HCT116 (cell line): ENCODE measurements at regions of chr20 and their contacts with region 1.

Region 1: DNA sequence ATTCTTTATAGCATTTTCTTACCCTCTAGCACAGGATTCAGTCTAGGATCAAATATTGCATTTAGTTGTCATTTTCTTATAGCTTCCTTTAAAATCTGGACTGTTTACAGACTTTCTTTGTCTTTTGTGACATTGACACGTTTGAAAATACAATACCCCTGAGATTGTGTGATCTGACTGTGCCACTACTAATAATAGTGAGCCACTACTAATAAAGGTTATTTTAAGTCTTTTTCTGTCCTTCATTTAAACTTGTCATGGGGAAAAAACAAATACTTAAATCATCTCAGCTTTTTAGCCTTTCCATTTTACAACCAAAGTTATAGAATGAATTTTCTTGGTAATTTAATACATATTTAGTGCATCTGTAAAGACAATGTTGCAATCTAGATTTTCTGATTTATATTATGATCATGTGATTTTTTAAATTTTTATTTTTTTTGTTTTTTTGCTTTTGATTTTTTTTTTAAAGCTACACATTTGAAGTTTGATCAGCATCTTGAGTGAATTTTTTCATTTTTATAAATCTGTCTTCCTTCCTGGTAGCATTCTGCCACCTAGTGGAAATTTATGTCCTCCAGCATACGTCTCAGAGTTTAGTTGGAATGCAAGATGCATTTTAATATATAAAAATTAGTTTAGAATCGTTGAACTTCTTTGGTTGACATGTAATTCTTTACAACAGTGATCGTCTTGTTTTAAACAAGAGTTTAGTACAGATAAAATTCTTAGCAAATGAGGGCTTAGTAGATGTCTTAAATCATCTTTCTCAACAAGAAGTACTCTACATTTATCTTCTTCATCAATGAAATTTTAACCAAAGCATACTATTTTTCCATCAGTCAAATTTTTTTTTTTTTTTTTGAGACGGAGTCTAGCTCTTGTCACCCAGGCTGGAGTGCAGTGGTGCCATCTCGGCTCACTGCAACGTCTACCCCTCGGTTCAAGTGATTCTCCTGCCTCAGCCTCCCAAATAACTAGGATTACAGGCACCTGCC is 119.4 kb downstream of the NCOA3 start:
- DNase-seq: peak; percentile 51
- ATAC-seq: no peak
- H3K4me3 ChIP-seq: no peak overlapping the region
- H3K27ac ChIP-seq: no peak overlapping the region
- H3K4me1 ChIP-seq: peaks cover 0 to 6% of the 10 kb centered on the region in 2 experiments; a peak in 2 of 4 replicates
- H3K27me3 ChIP-seq: no peaks in the 10 kb centered on the region
- CTCF ChIP-seq: peak; percentile 66 to 79 (median 73); a peak in 5 of 6 replicates
- POLR2A ChIP-seq: no peak
- RAD21 ChIP-seq: peak; percentile 83

Region 2: GRCh38 chr20:47196091-47197081 is 424.7 kb before region 1 on chr20:
- CTCF ChIA-PET with region 1: interaction called, 11 read pairs
- POLR2A ChIA-PET with region 1: no interaction called
- RAD21 ChIA-PET with region 1: no interaction called
- intact Hi-C with region 1: loop called (anchors 1 kb)
- DNase-seq: peak; percentile 62
- ATAC-seq: peak; percentile 75
- H3K4me3 ChIP-seq: no peak overlapping the region
- H3K27ac ChIP-seq: no peak overlapping the region
- H3K4me1 ChIP-seq: peaks cover 16 to 45% of the 10 kb centered on the region in 2 experiments
- H3K27me3 ChIP-seq: no peaks in the 10 kb centered on the region
- CTCF ChIP-seq: peak; percentile 92 to 98 (median 96)
- POLR2A ChIP-seq: no peak
- RAD21 ChIP-seq: peak; percentile 99

Region 3: DNA sequence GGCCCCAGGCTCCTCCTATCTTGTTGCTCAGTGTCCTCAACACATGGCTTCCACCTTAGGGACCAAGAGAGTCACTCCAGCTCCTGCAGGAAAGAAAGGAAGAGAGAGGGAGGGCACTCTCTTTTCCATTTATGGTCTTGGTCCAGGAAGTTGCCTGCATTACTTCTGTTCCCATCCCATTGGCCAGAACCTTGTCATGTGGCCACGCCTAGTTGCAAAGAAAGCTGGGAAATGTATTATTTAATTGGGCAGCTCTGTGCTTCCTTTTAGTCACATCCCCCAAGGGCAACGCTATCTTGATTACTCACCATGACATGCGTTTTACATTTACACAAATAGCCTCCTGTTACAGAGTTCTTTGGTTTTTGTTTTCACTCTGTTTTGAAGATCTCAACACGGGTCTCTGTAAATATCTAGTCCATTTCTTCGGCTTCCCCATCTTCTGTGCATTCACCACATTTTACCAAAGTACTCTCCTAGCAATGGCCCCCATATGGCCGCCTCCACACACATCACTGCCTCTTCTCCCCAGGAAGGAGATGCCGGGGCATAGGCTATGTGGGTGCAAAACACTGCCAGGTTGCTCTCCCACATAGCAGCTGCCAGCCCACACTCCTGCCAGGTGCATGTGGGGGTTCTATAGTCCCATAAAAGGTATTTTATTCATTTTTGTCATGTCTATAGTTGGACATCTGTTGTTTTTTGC is 228.9 kb before region 1 on chr20:
- CTCF ChIA-PET with region 1: interaction called, 13 read pairs
- POLR2A ChIA-PET with region 1: interaction called, 6 read pairs
- RAD21 ChIA-PET with region 1: no interaction called
- intact Hi-C with region 1: no loop called
- DNase-seq: peak; percentile 81
- ATAC-seq: peak; percentile 86
- H3K4me3 ChIP-seq: no peak overlapping the region
- H3K27ac ChIP-seq: peak overlapping the region; percentile 28; the same call in 1 of the 2 replicates
- H3K4me1 ChIP-seq: peaks cover 7 to 43% of the 10 kb centered on the region in 2 experiments
- H3K27me3 ChIP-seq: no peaks in the 10 kb centered on the region
- CTCF ChIP-seq: no peak
- POLR2A ChIP-seq: peak; percentile 16
- RAD21 ChIP-seq: no peak

Region 4: DNA sequence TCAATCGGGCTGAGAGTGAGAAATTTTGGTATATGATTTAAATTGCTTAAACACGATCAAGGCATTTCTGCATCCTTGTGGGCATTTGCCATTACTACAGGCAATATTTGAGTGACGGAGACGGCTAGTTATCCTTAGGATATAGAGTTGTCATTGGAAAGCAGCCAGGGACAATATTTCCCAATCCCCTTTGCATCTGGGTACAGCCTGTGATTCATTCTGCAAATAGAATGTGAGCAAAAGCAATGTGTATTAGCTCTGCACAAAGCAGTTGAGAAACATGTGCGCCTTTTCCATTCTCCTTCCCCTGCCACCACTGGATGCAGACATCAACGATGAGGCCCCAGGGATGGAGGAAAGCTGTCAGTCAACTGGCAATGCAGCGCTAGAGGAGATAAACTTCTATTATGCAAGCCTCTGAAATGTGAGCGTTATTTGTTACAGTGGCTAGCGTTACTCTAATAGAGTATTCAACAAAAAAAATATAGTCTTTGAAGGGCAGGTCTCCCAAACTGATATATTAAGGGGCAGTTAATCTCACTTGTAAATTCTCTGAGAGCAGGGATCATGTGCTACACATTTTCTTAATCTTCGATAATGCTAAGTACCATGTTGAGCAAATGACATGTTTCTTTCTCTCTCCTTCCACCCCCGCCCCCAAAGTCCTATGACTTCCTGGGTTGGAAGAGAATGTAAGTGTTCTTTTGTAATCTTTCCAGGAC is 156.6 kb before region 1 on chr20:
- CTCF ChIA-PET with region 1: no interaction called
- POLR2A ChIA-PET with region 1: no interaction called
- RAD21 ChIA-PET with region 1: no interaction called
- intact Hi-C with region 1: no loop called
- DNase-seq: peak; percentile 36
- ATAC-seq: peak; percentile 85
- H3K4me3 ChIP-seq: no peak overlapping the region
- H3K27ac ChIP-seq: no peak overlapping the region
- H3K4me1 ChIP-seq: peaks cover 6% of the 10 kb centered on the region in 2 experiments; a peak in 3 of 4 replicates
- H3K27me3 ChIP-seq: no peaks in the 10 kb centered on the region
- CTCF ChIP-seq: peak in 1 of 3 experiments; percentile 41; a peak in 1 of 6 replicates
- POLR2A ChIP-seq: no peak
- RAD21 ChIP-seq: peak; percentile 32; the same call in 1 of the 2 replicates

Region 5: DNA sequence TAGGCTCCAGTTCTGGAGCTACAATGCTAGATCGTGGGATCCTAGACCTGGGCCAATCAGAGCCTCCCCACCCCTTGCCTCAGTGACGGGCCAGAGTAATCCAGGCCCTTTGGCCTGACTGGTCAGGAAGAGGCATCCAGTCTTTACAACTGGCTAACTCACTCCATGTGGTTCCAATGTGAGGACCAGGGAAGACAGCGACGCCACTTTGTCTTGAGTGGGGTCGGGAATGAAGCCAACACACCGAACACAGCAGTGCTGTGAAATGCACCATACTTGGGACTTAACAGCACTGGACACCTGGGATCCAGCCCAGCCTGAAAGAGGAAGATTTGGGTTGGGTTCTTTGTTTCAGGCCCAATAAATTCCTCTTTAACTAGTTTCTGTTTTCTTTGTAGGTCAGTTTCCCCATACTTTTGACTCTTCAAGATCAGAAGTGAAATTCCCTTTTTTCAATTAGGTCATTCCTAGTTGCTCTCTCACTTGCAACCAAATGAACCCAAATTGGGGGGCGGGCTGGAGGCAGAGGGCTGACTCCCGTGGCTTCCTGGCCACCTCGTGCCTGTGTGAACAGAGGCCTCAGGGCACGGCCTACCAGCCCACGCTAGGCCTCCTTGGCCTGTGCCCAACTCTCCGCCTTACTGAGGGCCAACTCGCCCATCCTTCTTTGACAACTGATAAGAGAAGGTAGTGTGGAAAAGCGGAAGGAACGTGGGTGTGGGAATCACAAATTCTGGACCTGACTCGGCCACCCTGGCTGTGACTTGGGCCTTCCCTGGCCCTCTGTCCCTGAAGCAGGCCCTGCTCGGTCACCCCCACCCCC is 147.1 kb after region 1 on chr20:
- CTCF ChIA-PET with region 1: no interaction called
- POLR2A ChIA-PET with region 1: no interaction called
- RAD21 ChIA-PET with region 1: no interaction called
- intact Hi-C with region 1: no loop called
- DNase-seq: no peak
- ATAC-seq: no peak
- H3K4me3 ChIP-seq: no peak overlapping the region
- H3K27ac ChIP-seq: no peak overlapping the region
- H3K4me1 ChIP-seq: peaks cover 5 to 16% of the 10 kb centered on the region in 2 experiments; a peak in 3 of 4 replicates
- H3K27me3 ChIP-seq: no peaks in the 10 kb centered on the region
- CTCF ChIP-seq: no peak
- POLR2A ChIP-seq: no peak
- RAD21 ChIP-seq: no peak